Activated CD4-positive, alpha-beta memory T cell treated with anti-CD3 and anti-CD28 coated beads, Interleukin-2, amount 10 ng/mL, durations not matched to agents 7 days and 5 days (primary cell): ENCODE measurements at regions of chr9 and their contacts with region 1.

Region 1: DNA sequence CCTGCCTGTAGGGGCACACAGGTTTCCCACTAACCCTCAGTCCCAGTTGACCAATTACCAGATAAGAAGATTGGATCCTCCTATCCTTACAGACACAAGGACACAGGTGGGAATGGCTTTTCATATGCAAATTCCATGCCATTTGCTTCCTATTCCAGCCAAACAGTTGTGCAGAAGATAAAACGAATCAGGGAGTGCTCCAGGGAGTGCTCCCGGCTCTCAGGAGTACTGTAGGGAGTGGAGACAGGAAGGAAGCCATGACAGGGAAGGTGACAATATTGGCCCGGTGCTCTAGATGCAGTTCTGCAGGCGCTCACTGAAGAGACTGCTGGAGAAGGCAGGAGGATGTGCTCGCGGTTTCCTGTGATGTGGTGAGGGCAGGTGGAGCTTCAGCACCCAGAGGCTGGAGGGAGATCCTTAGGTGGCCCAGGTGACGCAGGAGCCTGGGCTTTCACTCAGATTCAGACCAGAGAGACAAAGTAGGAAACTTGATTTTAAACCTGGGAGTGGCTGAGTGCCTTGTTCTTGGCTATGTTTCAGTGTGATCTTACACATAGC is 260.0 kb downstream of the AUH start:
- DNase-seq: peak; percentile 94
- H3K4me3 Mint-ChIP-seq: peak overlapping the region; percentile 62
- H3K27ac Mint-ChIP-seq: peak overlapping the region; percentile 81
- H3K4me1 Mint-ChIP-seq: peaks cover 77% of the 10 kb centered on the region
- H3K27me3 Mint-ChIP-seq: no peaks in the 10 kb centered on the region

Region 2: DNA sequence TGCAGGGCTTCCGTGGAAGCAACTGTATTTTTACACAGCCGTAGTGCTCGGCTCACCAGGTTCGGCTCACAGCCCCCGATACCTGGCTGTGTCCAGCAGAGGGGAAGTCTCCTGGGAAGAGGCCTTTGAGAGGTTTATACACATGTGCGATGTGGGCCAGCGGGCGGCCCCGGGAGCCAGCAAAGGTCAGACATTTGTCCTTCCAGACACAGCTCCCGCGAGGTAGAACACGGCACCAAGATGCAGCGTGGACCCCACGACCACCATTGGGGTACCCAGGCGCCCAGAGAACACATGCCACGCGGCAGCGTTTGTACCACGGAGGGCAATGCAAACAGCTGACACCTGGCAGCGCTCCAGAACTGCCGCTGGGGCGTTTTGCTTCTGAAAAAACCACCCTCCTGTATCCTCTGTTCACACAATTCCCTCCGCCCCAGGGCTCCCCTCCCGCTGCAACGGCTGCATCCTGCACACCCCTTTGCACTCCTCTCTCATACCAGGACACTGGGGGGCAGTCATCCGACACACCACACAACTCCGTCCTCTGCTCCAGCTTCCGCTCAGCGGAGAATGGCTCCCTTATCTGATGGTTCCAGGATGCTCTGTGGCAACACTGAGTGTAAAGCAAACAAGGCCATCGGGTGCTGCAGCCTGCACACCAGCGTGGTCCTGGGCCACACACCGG is 64.7 kb before region 1 on chr9:
- CTCF ChIA-PET with region 1: interaction called, 4 read pairs
- POLR2A ChIA-PET with region 1: interaction called, 16 read pairs
- DNase-seq: peak; percentile 85
- H3K4me3 Mint-ChIP-seq: peak overlapping the region; percentile 31
- H3K27ac Mint-ChIP-seq: peak overlapping the region; percentile 74
- H3K4me1 Mint-ChIP-seq: peaks cover 65% of the 10 kb centered on the region
- H3K27me3 Mint-ChIP-seq: no peaks in the 10 kb centered on the region

Region 3: DNA sequence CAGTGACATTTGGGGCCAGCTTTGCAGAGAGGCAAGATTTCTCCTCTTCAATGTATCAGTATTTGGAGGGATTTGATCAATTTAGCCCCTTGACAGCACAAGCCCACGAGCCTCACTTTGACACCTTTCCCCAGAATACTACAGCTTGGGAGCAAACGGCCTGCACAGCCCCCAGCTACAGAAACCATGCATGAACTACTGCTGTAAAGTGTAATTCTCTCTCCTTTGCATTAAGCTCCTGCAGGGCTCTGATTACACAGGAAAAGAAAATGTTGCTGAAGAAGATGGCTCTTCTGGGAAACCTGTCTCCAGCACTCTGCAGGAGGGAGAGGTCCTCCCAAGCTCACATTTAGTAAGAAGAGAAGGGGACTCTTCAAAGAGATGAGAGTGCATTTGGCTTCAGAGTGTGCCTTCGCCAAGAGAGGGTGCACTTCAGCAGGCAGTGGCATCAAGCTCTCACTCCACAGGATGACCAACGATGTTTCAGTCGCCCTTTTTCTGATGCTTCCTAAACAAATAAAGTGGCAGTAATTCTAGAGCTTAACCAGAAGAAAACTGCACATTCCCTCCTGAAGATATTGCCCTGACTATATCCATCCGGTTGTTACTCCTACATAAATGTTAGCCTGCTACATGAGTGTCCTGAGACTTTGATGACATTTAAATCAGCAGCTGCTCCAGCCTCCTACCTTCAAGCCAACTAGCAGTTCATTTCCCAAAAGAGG is 12.1 kb before region 1 on chr9:
- CTCF ChIA-PET with region 1: interaction called, 5 read pairs
- POLR2A ChIA-PET with region 1: interaction called, 15 read pairs
- DNase-seq: peak; percentile 33
- H3K4me3 Mint-ChIP-seq: no peak overlapping the region
- H3K27ac Mint-ChIP-seq: peak overlapping the region; percentile 16
- H3K4me1 Mint-ChIP-seq: peaks cover 48% of the 10 kb centered on the region
- H3K27me3 Mint-ChIP-seq: no peaks in the 10 kb centered on the region

Region 4: GRCh38 chr9:91177661-91178280 is 76.1 kb after region 1 on chr9:
- CTCF ChIA-PET with region 1: no interaction called
- POLR2A ChIA-PET with region 1: interaction called, 13 read pairs
- DNase-seq: peak; percentile 69
- H3K4me3 Mint-ChIP-seq: peak overlapping the region; percentile 40
- H3K27ac Mint-ChIP-seq: peak overlapping the region; percentile 92
- H3K4me1 Mint-ChIP-seq: peaks cover 64% of the 10 kb centered on the region
- H3K27me3 Mint-ChIP-seq: no peaks in the 10 kb centered on the region

Region 5: DNA sequence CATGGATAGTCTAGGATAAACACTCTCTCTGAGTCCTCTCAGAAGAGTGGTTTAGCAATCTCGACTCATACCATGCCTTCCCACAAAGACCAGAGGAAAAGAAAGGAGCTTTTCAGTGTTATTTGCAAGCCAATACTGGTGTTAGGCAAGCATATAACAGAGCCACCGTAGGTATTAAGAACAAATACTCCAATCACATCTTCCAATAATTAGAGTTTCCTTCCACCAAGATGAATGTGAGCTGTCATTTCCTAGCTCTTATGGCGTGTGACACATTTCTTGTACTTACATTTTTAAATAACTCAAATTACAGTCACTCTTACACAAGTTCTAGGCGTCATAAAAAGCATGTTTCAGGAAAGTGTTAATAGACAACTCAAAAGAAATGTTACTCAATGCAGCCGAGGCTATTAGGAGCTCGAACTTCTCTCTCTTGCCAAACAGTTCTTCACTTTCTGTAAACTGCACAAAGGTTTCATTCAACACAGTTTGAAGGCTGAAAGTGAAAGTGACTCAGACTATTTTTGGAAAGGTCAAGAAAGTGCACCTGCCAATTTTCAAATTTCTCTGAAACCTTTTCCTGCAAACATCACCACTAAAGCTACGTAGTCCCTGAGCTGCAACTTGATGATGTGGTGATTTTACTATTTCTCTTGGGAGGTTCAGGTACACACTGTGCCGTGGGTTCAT is 106.2 kb after region 1 on chr9:
- CTCF ChIA-PET with region 1: no interaction called
- POLR2A ChIA-PET with region 1: interaction called, 10 read pairs
- DNase-seq: no peak
- H3K4me3 Mint-ChIP-seq: peak overlapping the region; percentile 58
- H3K27ac Mint-ChIP-seq: peak overlapping the region; percentile 86
- H3K4me1 Mint-ChIP-seq: peaks cover 57% of the 10 kb centered on the region
- H3K27me3 Mint-ChIP-seq: no peaks in the 10 kb centered on the region

Region 6: DNA sequence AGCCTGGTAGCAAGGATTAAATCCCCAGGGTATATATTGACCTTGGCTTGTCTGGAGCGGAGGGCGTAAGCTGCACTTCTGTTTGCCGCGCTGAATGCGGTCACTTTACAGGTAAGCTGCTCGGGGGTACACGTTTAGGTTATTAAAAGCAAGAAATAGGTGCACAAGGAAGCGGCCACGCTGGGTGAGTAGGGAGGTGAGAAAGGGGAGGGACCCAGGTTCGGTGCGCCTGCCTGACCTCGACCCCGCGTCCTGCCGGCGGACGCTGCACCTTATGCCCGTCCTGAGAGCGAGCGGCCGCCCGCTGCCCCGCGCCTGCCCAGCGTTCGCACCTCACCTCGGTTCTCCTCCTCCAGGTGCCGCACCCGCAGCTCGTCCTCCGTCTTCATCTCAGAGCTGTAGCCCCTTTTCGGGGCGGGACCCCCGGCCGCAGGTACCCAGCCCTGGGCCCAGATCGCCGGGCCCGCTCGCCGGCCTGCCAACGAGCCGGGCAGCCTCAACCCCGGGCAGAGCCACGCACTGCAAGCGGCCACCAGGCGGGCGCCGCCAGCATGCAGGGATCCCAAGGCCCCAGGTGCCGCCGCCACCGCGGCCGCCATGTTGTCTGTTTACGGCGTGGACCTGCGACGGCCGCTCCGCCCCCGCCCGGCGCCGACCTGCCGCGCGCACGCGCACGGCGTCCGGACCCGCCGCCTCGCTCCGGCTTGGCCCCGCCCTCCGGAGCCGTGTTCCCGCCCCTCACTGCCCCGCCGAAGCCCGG is 259.8 kb after region 1 on chr9 and contains the start of gene AUH:
- CTCF ChIA-PET with region 1: interaction called, 4 read pairs
- POLR2A ChIA-PET with region 1: interaction called, 14 read pairs
- DNase-seq: peak; percentile 88
- H3K4me3 Mint-ChIP-seq: peak within 1 kb of the TSS; percentile 99
- H3K27ac Mint-ChIP-seq: peak within 1 kb of the TSS; percentile 94
- H3K4me1 Mint-ChIP-seq: peaks cover 55% of the 10 kb centered on the region
- H3K27me3 Mint-ChIP-seq: no peaks in the 10 kb centered on the region
- total RNA-seq, gene AUH: 34.8 to 39.3 TPM